ENCODE measurements at regions of chr18 and their contacts with region 1.

Region 1: GRCh38 chr18:10519999-10520935 is 5.6 kb upstream of the NAPG start:
- DNase-seq: peak; percentile 54 to 70
- H3K4me3 ChIP-seq: no peak overlapping the region
- H3K27ac ChIP-seq: no peak overlapping the region
- H3K4me1 ChIP-seq: peaks cover 7% of the 10 kb centered on the region
- H3K27me3 ChIP-seq: 0 out of 2 replicates have a peak, but pooled peaks cover 3% of the 10 kb centered on the region
- CTCF ChIP-seq: peak; percentile 74

Region 2: GRCh38 chr18:9971313-9971920 is 548.9 kb before region 1 on chr18:
- CTCF ChIA-PET with region 1: no interaction called
- POLR2A ChIA-PET with region 1: no interaction called
- intact Hi-C with region 1: loop called (anchors 1 kb)
- DNase-seq: peak; percentile 65 to 68
- H3K4me3 ChIP-seq: no peak overlapping the region
- H3K27ac ChIP-seq: no peak overlapping the region
- H3K4me1 ChIP-seq: no peaks in the 10 kb centered on the region
- H3K27me3 ChIP-seq: no peaks in the 10 kb centered on the region
- CTCF ChIP-seq: peak; percentile 94

Region 3: GRCh38 chr18:10508591-10508990 is 11.7 kb before region 1 on chr18:
- CTCF ChIA-PET with region 1: no interaction called
- POLR2A ChIA-PET with region 1: no interaction called
- intact Hi-C with region 1: no loop called
- DNase-seq: no peak
- H3K4me3 ChIP-seq: no peak overlapping the region
- H3K27ac ChIP-seq: no peak overlapping the region
- H3K4me1 ChIP-seq: no peaks in the 10 kb centered on the region
- H3K27me3 ChIP-seq: no peaks in the 10 kb centered on the region
- CTCF ChIP-seq: no peak